ENCODE measurements at regions of chr3 and their contacts with region 1.

Region 1: DNA sequence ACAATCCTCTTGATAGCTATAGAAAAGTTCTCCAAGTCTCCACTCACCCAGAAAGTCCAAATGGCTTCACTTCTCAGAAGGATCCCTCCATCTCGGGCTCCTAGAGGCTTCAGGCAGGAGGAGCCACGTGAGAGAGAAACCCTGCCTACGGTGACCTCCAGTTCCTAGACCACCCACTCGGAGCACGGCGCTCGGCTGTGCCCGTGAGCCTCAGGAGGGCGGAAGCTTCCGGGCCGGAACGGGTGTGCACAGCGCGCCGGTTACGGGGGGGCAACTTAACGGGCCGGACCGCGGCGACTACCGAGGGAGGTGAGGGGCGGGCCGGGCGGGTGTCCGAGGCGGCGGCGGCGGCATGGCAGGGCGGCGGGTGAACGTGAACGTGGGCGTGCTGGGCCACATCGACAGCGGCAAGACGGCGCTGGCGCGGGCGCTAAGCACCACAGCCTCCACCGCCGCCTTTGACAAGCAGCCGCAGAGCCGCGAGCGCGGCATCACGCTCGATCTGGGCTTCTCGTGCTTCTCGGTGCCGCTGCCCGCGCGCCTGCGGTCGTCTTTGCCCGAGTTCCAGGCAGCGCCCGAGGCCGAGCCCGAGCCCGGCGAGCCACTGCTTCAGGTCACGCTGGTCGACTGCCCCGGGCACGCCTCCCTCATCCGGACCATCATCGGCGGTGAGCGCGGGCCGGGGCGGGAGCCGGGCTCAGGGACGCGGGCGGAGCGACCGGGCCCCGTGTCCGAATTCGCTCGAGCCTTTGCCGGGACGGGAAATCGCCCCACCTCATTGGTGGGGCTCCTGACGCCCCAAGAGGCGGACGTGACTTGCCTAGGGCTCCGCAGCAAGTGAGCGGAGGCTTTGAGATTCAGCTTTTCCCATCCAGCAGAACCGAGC is at the start of gene EEFSEC:
- DNase-seq: peak; percentile 85 to 90 (median 86)
- ATAC-seq: peak; percentile 78 to 94 (median 92)
- H3K4me3 ChIP-seq: peak within 1 kb of the TSS; percentile 74 to 99 (median 94)
- H3K27ac ChIP-seq: peak within 1 kb of the TSS; percentile 86 to 97 (median 94)
- H3K4me1 ChIP-seq: peaks cover 0 to 31% (median 16%) of the 10 kb centered on the region in 12 donors
- H3K27me3 ChIP-seq: no peaks in the 10 kb centered on the region
- CTCF ChIP-seq: peak in 1 of 12 donors; percentile 8
- POLR2A ChIP-seq: peak in 1 of 2 donors; percentile 47
- total RNA-seq, gene EEFSEC: 17.8 to 48.0 (median 23.7) TPM

Region 2: DNA sequence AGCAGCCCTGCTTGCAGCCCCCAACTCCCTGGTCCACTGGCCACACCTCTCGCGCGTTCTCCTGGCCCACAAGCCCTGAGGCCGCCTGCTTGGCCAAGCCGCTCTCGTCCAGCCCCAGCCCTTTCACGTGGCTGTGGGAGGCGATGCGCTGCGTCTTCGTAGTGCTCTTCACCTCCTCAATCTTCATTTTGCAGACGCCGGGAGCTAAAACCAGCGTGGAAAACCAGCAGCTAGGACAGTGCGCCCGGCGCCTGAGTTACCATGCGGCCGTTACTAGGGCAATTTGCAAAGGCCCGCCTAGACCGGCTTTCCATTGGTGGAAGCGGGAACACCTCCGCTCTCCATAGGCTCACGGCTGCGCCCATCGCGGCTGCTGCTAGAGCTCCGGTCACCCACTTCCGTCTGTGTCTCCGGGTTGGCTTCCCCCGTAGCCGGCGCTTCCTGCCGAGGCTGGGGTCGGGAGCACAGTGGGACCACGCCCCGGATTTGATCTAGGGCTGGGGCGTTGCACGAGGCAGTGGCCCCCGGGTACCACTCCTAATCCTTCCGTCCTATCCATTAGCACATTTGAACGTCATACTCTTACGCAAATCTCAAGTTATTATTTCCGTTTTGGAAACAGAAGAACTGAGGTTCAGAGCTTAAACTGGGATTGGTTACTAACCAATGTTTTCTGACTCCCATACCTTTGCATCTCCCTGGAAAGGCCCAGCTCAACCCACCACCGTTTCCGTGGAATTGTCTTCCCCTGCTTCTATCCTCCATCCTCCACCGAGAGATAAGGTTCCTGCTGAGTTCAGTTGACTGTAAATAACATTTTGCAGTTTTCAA is 29.6 kb before region 1 on chr3 and contains the start of gene RUVBL1:
- intact Hi-C with region 1: loop called in 4 of 10 experiments (anchors 1 to 2 kb)
- DNase-seq: peak; percentile 98 to 99 (median 98)
- ATAC-seq: peak; percentile 100
- H3K4me3 ChIP-seq: peak within 1 kb of the TSS; percentile 70 to 98 (median 86)
- H3K27ac ChIP-seq: peak within 1 kb of the TSS; percentile 31 to 90 (median 79)
- H3K4me1 ChIP-seq: peaks cover 0 to 15% (median 11%) of the 10 kb centered on the region in 12 donors
- H3K27me3 ChIP-seq: no peaks in the 10 kb centered on the region
- CTCF ChIP-seq: no peak
- POLR2A ChIP-seq: peak in 1 of 2 donors; percentile 65
- total RNA-seq, gene RUVBL1: 19.1 to 39.9 (median 26.2) TPM